HEK293 (cell line): ENCODE measurements at regions of chr9 and their contacts with region 1.

Region 1: GRCh38 chr9:124776954-124777665 is at the start of gene OLFML2A:
- H3K4me3 ChIP-seq: peak within 1 kb of the TSS; percentile 39
- H3K27ac ChIP-seq: peak within 1 kb of the TSS; percentile 41; the same call in 1 of the 2 replicates
- H3K4me1 ChIP-seq: peaks cover 2% of the 10 kb centered on the region; the same call in 1 of the 2 replicates
- CTCF ChIP-seq: no peak

Region 2: GRCh38 chr9:123278361-123278760 is 1498.7 kb before region 1 on chr9:
- CTCF ChIA-PET with region 1: no interaction called
- POLR2A ChIA-PET with region 1: no interaction called
- H3K4me3 ChIP-seq: no peak overlapping the region
- H3K27ac ChIP-seq: no peak overlapping the region
- H3K4me1 ChIP-seq: no peaks in the 10 kb centered on the region
- CTCF ChIP-seq: no peak

Region 3: GRCh38 chr9:124794902-124795491 is 17.9 kb after region 1 on chr9:
- CTCF ChIA-PET with region 1: interaction called, 60 read pairs
- POLR2A ChIA-PET with region 1: interaction called, 4 read pairs
- H3K4me3 ChIP-seq: no peak overlapping the region
- H3K27ac ChIP-seq: no peak overlapping the region
- H3K4me1 ChIP-seq: no peaks in the 10 kb centered on the region
- CTCF ChIP-seq: peak; percentile 44; the same call in 1 of the 2 replicates

Region 4: DNA sequence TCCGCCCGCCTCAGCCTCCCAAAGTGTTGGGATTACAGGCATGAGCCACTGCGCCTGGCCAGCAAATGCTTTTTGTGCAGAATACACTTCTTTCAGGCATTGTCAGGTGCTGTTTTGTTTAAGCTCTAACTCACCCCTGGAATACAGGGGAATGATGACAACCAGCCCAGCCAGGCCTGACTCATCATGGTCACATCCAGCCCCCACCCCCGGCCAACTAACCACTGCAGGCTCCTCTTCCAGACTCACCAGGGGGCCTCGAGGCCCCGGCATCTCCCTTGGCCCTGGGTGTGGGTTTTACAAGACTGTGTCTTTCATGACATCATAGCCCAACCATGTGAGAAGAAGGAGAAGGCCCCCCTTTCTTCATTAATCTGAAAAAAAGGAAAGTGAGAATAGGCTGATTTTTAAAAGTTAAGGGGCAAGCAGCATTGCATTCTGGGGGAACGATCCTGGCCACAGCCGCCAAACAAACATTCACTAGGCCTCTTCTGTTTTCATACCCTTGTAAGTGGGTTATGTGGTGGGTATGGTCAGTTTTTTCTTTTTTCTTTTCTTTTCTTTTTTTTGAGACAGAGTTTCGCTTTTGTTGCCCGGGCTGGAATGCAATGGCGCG is 35.4 kb after region 1 on chr9:
- CTCF ChIA-PET with region 1: interaction called, 97 read pairs
- POLR2A ChIA-PET with region 1: interaction called, 12 read pairs
- H3K4me3 ChIP-seq: no peak overlapping the region
- H3K27ac ChIP-seq: no peak overlapping the region; the same call in none of the 2 replicates
- H3K4me1 ChIP-seq: 0 out of 2 replicates have a peak, but pooled peaks cover 3% of the 10 kb centered on the region
- CTCF ChIP-seq: no peak

Region 5: GRCh38 chr9:124818431-124819281 is 41.5 kb after region 1 on chr9:
- CTCF ChIA-PET with region 1: interaction called, 97 read pairs
- POLR2A ChIA-PET with region 1: no interaction called
- H3K4me3 ChIP-seq: no peak overlapping the region
- H3K27ac ChIP-seq: no peak overlapping the region
- H3K4me1 ChIP-seq: no peaks in the 10 kb centered on the region
- CTCF ChIP-seq: no peak

Region 6: GRCh38 chr9:124861342-124862229 is 84.5 kb after region 1 on chr9 and contains the starts of genes ARPC5L and RPL35:
- CTCF ChIA-PET with region 1: interaction called, 1,257 read pairs
- POLR2A ChIA-PET with region 1: interaction called, 201 read pairs
- H3K4me3 ChIP-seq: peak within 1 kb of the TSS; percentile 86
- H3K27ac ChIP-seq: peak within 1 kb of the TSS; percentile 100
- H3K4me1 ChIP-seq: no peaks in the 10 kb centered on the region
- CTCF ChIP-seq: peak; percentile 59; the same call in 1 of the 2 replicates